ENCODE measurements at regions of chr2 and their contacts with region 1.

Region 1: GRCh38 chr2:238060542-238061314 is at the start of gene SCLY:
- DNase-seq: peak; percentile 97 to 99 (median 99)
- ATAC-seq: peak; percentile 99 to 100
- H3K4me3 ChIP-seq: peak within 1 kb of the TSS; percentile 92
- H3K27ac ChIP-seq: peak within 1 kb of the TSS; percentile 93
- H3K4me1 ChIP-seq: no peaks in the 10 kb centered on the region
- H3K27me3 ChIP-seq: no peaks in the 10 kb centered on the region
- total RNA-seq, gene SCLY: 9.4 to 14.2 (median 11.7) TPM

Region 2: DNA sequence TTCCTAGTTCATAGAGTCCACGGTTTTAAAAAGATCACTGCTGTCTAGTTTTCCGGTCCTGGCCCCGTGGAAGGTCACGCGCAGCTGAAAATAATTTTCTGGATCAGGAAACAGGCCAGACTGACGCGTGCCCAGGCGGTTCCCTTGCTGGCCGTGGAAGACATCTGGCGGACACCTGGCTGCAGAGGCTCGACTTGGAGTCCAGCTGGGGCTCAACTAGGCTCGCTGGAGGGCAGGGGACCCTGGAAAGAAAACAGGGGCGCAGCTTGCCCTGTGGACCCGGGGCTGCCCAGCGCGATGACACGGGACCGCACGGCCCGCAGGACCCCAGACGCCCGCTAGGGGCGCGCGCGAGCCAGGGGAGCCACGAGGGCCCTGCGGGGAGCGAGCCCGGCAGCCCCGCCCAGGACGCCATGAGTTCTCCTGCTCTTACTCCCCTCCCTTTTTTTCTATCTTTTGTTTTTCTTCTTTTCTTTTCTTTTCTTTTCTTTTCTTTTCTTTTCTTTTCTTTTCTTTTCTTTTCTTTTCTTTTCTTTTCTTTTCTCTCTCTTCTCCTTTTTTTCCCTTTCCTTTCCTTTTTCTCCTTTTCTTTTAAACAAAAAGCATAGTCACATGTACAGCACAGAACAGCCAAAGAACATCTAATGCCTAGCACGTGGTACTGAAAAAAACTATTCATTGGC is 137.1 kb before region 1 on chr2:
- intact Hi-C with region 1: no loop called
- DNase-seq: peak; percentile 75 to 92 (median 91)
- ATAC-seq: peak; percentile 91 to 96
- H3K4me3 ChIP-seq: no peak overlapping the region
- H3K27ac ChIP-seq: no peak overlapping the region
- H3K4me1 ChIP-seq: no peaks in the 10 kb centered on the region
- H3K27me3 ChIP-seq: no peaks in the 10 kb centered on the region

Region 3: GRCh38 chr2:237966565-237967462 is 93.9 kb before region 1 on chr2 and contains the start of gene UBE2F:
- intact Hi-C with region 1: loop called in 1 of 4 experiments (anchors 5 kb)
- DNase-seq: peak; percentile 97 to 99 (median 99)
- ATAC-seq: peak; percentile 97
- H3K4me3 ChIP-seq: peak within 1 kb of the TSS; percentile 91
- H3K27ac ChIP-seq: peak within 1 kb of the TSS; percentile 58
- H3K4me1 ChIP-seq: peaks cover 10% of the 10 kb centered on the region
- H3K27me3 ChIP-seq: no peaks in the 10 kb centered on the region
- total RNA-seq, gene UBE2F: 100 to 118 (median 107) TPM

Measured in right cardiac atrium (tissue), 5 donors.